SK-N-SH (cell line): ENCODE measurements at regions of chr4 and their contacts with region 1.

Region 1: DNA sequence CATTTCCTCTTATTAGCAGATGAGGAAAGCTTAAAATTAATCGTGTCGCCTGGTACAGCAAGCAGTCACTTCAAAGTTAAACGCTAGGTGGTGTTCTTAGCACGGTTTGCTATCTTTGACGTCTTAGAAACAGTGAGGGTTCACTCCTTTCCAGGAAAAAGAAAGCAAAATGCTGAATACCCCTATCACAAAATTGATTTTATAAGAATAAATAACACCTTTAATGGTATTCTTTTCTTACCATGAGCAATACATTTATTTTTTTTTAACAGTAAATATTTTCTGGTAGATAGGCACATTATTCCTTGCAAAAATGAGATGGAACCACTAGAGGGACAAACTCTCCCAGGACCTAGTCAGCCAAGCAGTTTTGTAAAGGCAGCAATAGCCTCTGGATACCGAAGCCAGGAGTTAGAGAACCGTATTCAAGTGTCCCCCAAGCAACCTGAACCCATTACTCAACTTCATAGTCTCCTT is 153.9 kb downstream of the KDR start:
- DNase-seq: peak; percentile 43
- H3K4me3 ChIP-seq: peak overlapping the region in 1 of 2 experiments; percentile 28; a peak in 1 of 4 replicates
- H3K27ac ChIP-seq: no peak overlapping the region
- H3K4me1 ChIP-seq: peaks cover 0 to 2% of the 10 kb centered on the region in 2 experiments; a peak in 1 of 4 replicates
- H3K27me3 ChIP-seq: no peaks in the 10 kb centered on the region; the same call in 1 of the 2 replicates
- CTCF ChIP-seq: peak; percentile 95
- EP300 ChIP-seq: no peak
- RAD21 ChIP-seq: peak; percentile 81

Region 2: GRCh38 chr4:54961357-54961975 is 10.0 kb before region 1 on chr4:
- CTCF ChIA-PET with region 1: interaction called, 90 read pairs
- POLR2A ChIA-PET with region 1: no interaction called
- DNase-seq: peak; percentile 42
- H3K4me3 ChIP-seq: no peak overlapping the region; a peak in 1 of 4 replicates
- H3K27ac ChIP-seq: no peak overlapping the region
- H3K4me1 ChIP-seq: no peaks in the 10 kb centered on the region; a peak in 1 of 4 replicates
- H3K27me3 ChIP-seq: no peaks in the 10 kb centered on the region; the same call in 1 of the 2 replicates
- CTCF ChIP-seq: peak; percentile 74
- EP300 ChIP-seq: no peak
- RAD21 ChIP-seq: peak; percentile 84

Region 3: GRCh38 chr4:55031158-55031557 is 59.6 kb after region 1 on chr4:
- CTCF ChIA-PET with region 1: no interaction called
- POLR2A ChIA-PET with region 1: no interaction called
- DNase-seq: no peak
- H3K4me3 ChIP-seq: no peak overlapping the region
- H3K27ac ChIP-seq: no peak overlapping the region; a peak in 1 of 4 replicates
- H3K4me1 ChIP-seq: peaks cover 0 to 3% of the 10 kb centered on the region in 2 experiments; a peak in 1 of 4 replicates
- H3K27me3 ChIP-seq: no peaks in the 10 kb centered on the region
- CTCF ChIP-seq: no peak
- EP300 ChIP-seq: no peak
- RAD21 ChIP-seq: no peak

Region 4: GRCh38 chr4:55312489-55313101 is 341.1 kb after region 1 on chr4:
- CTCF ChIA-PET with region 1: interaction called, 129 read pairs
- POLR2A ChIA-PET with region 1: no interaction called
- DNase-seq: peak; percentile 19
- H3K4me3 ChIP-seq: no peak overlapping the region
- H3K27ac ChIP-seq: no peak overlapping the region
- H3K4me1 ChIP-seq: no peaks in the 10 kb centered on the region
- H3K27me3 ChIP-seq: peaks cover 4% of the 10 kb centered on the region; the same call in 1 of the 2 replicates
- CTCF ChIP-seq: peak; percentile 68
- EP300 ChIP-seq: no peak
- RAD21 ChIP-seq: peak; percentile 50; the same call in 1 of the 2 replicates

Region 5: GRCh38 chr4:55321707-55322264 is 350.3 kb after region 1 on chr4:
- CTCF ChIA-PET with region 1: interaction called, 129 read pairs
- POLR2A ChIA-PET with region 1: no interaction called
- DNase-seq: peak; percentile 44
- H3K4me3 ChIP-seq: no peak overlapping the region; a peak in 1 of 4 replicates
- H3K27ac ChIP-seq: no peak overlapping the region
- H3K4me1 ChIP-seq: no peaks in the 10 kb centered on the region
- H3K27me3 ChIP-seq: no peaks in the 10 kb centered on the region
- CTCF ChIP-seq: peak; percentile 73
- EP300 ChIP-seq: no peak
- RAD21 ChIP-seq: peak; percentile 84

Region 6: GRCh38 chr4:55329012-55329411 is 357.5 kb after region 1 on chr4:
- CTCF ChIA-PET with region 1: interaction called, 129 read pairs
- POLR2A ChIA-PET with region 1: no interaction called
- DNase-seq: no peak
- H3K4me3 ChIP-seq: no peak overlapping the region
- H3K27ac ChIP-seq: no peak overlapping the region
- H3K4me1 ChIP-seq: no peaks in the 10 kb centered on the region
- H3K27me3 ChIP-seq: no peaks in the 10 kb centered on the region
- CTCF ChIP-seq: no peak
- EP300 ChIP-seq: no peak
- RAD21 ChIP-seq: no peak